Dorsolateral prefrontal cortex (tissue), 120 donors: ENCODE measurements at regions of chr5 and their contacts with region 1.

Region 1: DNA sequence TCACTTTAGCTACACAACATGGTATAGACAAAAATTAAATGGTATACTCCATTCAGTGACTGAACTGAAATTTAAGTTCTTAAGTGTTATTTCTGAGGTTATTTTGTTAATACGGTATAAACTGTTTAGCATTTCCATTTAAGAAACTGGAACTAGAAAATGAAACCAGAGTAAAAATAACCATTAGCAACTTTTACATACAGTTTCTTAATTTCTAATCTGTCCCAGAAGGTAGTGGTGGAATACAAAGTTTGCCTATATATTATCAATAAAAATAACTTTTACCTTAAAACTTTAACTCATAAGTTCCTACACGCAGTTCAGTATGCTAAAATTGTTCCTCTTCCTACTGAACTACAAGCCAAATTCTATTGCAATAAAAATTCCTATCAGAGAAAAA is 10.3 kb downstream of the GOLPH3 start:
- DNase-seq: no peak
- H3K4me3 ChIP-seq: no peak overlapping the region
- H3K27ac ChIP-seq: no peak overlapping the region
- H3K27me3 ChIP-seq: no peaks in the 10 kb centered on the region
- CTCF ChIP-seq: no peak

Region 2: GRCh38 chr5:32126691-32127090 is 37.1 kb before region 1 on chr5:
- intact Hi-C with region 1: loop called in 1 of 2 experiments (anchors 5 kb)
- DNase-seq: no peak
- H3K4me3 ChIP-seq: no peak overlapping the region
- H3K27ac ChIP-seq: no peak overlapping the region
- H3K27me3 ChIP-seq: no peaks in the 10 kb centered on the region
- CTCF ChIP-seq: no peak

Region 3: DNA sequence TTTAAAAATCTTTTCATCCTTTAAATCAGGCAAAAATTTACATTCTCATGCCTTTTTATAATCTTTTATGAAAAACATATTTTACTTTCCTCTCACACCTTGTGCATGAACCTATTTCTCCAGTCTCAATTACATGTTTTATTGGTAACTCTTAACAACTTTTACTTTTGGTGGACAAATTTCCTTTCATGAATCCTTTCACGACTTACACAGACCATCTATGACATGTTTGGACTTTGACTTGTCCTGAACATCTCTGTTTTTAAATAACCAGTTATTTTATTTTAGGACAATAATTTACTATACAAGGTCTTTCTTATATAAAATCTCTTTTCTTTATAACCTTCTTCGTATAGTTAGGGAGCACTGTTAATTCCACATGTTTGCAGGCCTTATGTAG is 175.4 kb after region 1 on chr5:
- intact Hi-C with region 1: no loop called
- DNase-seq: no peak
- H3K4me3 ChIP-seq: no peak overlapping the region
- H3K27ac ChIP-seq: no peak overlapping the region
- H3K27me3 ChIP-seq: no peaks in the 10 kb centered on the region
- CTCF ChIP-seq: no peak